Activated CD4-positive, alpha-beta T cell treated with anti-CD3 and anti-CD28 coated beads for 36 hours (primary cell): ENCODE measurements at regions of chr16 and their contacts with region 1.

Region 1: DNA sequence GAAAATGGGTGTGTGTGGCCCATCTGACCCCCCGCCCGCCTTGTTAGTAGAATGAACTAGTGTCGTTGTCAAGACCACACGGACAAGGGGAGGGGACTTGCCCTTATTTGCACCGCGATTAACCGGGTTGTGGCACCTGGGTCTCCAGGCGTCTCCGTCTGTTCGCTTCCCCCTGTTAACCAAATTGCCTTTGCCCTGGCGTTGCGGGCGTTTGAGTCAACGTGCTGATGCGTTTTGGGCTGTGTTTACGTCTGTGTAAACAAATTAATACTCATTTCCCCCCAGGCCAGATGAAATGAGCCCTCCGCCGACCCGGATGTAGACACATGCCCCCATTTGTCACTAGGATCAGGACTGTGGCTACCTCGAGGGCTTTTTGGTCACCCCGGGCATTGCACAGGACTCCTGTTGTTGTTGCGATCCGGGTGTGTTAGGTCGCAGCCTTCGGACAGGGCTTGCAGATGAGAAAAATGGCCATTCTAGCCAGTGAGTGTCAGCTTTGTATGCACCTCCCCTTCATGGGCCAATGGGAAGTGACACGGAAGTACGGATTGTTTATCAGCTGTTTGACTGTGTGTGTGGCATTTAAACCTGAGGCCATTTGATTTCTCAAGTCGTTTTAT is 906 bp downstream of the RBL2 start:
- DNase-seq: peak; percentile 69
- ATAC-seq: peak; percentile 67
- H3K4me3 Mint-ChIP-seq: peak overlapping the region; percentile 98
- H3K27ac Mint-ChIP-seq: peak overlapping the region; percentile 95
- H3K4me1 Mint-ChIP-seq: peaks cover 42% of the 10 kb centered on the region
- H3K27me3 Mint-ChIP-seq: no peaks in the 10 kb centered on the region

Region 2: DNA sequence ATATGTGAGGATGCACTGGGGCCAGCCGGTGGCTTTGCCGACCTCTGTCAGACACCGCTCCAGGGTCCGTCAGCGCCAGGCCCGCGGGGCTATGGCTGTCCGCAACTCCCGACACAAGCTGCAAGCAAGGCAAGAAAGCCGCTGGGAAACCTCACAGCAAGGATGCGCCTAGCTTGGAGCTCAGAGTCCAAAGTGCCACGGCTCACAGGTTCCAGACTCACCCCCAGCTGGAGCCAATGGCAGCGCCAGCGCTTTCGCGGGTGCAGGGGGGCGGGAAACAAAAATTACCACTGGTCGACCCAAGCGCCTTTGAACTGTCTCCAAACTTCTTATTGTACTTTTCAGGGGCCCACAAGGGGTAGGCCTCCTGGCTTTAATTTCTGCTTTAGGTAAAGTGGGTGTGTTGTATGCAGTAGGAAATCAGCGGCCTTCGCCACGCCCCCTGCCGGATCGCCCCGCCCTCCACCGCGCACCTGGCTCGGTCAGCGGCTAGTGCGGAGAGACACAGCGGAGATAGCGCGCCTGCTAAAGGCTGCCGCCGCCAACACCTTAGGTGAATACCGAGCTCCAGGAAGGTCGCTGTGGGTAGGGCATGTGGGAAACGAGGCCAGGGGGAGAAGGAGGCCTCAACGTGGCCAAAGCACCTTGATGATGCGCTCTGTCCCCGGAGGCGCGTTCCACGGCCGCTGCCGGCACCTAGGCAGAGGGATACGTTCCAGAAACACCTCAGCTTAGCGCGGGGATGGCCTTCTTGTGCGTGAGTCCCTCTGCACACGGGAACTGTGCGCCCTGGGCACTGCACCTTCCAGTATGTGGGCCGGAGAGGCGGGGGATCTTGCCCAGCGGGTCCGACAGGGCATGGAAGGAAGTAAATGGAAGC is 61.9 kb before region 1 on chr16:
- CTCF ChIA-PET with region 1: no interaction called
- POLR2A ChIA-PET with region 1: no interaction called
- intact Hi-C with region 1: loop called (anchors 1 kb)
- DNase-seq: peak; percentile 88
- ATAC-seq: peak; percentile 97
- H3K4me3 Mint-ChIP-seq: no peak overlapping the region
- H3K27ac Mint-ChIP-seq: peak overlapping the region; percentile 61
- H3K4me1 Mint-ChIP-seq: peaks cover 24% of the 10 kb centered on the region
- H3K27me3 Mint-ChIP-seq: no peaks in the 10 kb centered on the region

Region 3: GRCh38 chr16:53445534-53445933 is 10.4 kb after region 1 on chr16:
- CTCF ChIA-PET with region 1: interaction called, 19 read pairs
- POLR2A ChIA-PET with region 1: interaction called, 3 read pairs
- intact Hi-C with region 1: no loop called
- DNase-seq: no peak
- ATAC-seq: peak; percentile 55
- H3K4me3 Mint-ChIP-seq: no peak overlapping the region
- H3K27ac Mint-ChIP-seq: peak overlapping the region; percentile 82
- H3K4me1 Mint-ChIP-seq: peaks cover 32% of the 10 kb centered on the region
- H3K27me3 Mint-ChIP-seq: no peaks in the 10 kb centered on the region

Region 4: GRCh38 chr16:53503270-53503923 is 68.2 kb after region 1 on chr16:
- CTCF ChIA-PET with region 1: interaction called, 4 read pairs
- POLR2A ChIA-PET with region 1: interaction called, 3 read pairs
- intact Hi-C with region 1: loop called (anchors 1 kb)
- DNase-seq: peak; percentile 100
- ATAC-seq: peak; percentile 92
- H3K4me3 Mint-ChIP-seq: peak overlapping the region; percentile 94
- H3K27ac Mint-ChIP-seq: peak overlapping the region; percentile 96
- H3K4me1 Mint-ChIP-seq: peaks cover 60% of the 10 kb centered on the region
- H3K27me3 Mint-ChIP-seq: no peaks in the 10 kb centered on the region